GM12878 (cell line): ENCODE measurements at regions of chr15 and their contacts with region 1.

Region 1: GRCh38 chr15:70036585-70037291 is 61.0 kb downstream of the TLE3 start:
- DNase-seq: peak; percentile 88
- ATAC-seq: peak; percentile 81
- H3K4me3 ChIP-seq: peak overlapping the region; percentile 25; the same call in 1 of the 2 replicates
- H3K27ac ChIP-seq: peak overlapping the region; percentile 68
- H3K4me1 ChIP-seq: peaks cover 40% of the 10 kb centered on the region
- H3K27me3 ChIP-seq: no peaks in the 10 kb centered on the region
- CTCF ChIP-seq: no peak
- EP300 ChIP-seq: peak in 1 of 2 experiments; percentile 60; a peak in 1 of 4 replicates
- POLR2A ChIP-seq: no peak
- RAD21 ChIP-seq: no peak

Region 2: DNA sequence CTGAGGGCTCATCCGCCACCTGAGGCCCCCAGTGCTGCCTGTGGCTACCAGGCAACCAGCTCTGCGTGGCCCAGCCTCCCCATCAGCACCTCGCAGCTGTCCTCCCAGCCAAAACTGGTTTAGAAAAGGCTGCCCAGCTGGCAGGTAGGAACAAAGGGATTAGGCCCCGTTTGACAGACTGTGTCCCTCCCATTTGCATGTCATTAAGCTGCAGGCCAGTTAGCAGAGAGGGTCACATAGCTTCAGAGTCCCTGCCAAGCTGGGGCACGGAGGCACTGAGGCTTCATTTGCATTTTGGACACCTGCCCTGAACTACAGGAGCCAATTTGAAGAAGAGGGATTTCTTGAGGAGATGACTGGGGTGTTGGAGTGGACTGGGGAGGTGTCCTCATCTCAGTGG is 116.9 kb before region 1 on chr15:
- CTCF ChIA-PET with region 1: no interaction called
- POLR2A ChIA-PET with region 1: no interaction called
- RAD21 ChIA-PET with region 1: no interaction called
- SMC1A ChIA-PET with region 1: no interaction called
- in situ Hi-C with region 1: no loop called
- intact Hi-C with region 1: no loop called
- DNase-seq: no peak
- ATAC-seq: no peak
- H3K4me3 ChIP-seq: no peak overlapping the region
- H3K27ac ChIP-seq: no peak overlapping the region
- H3K4me1 ChIP-seq: peaks cover 21% of the 10 kb centered on the region
- H3K27me3 ChIP-seq: peaks cover 0 to 3% of the 10 kb centered on the region in 2 experiments; a peak in 3 of 4 replicates
- CTCF ChIP-seq: no peak
- EP300 ChIP-seq: no peak
- POLR2A ChIP-seq: no peak
- RAD21 ChIP-seq: no peak

Region 3: DNA sequence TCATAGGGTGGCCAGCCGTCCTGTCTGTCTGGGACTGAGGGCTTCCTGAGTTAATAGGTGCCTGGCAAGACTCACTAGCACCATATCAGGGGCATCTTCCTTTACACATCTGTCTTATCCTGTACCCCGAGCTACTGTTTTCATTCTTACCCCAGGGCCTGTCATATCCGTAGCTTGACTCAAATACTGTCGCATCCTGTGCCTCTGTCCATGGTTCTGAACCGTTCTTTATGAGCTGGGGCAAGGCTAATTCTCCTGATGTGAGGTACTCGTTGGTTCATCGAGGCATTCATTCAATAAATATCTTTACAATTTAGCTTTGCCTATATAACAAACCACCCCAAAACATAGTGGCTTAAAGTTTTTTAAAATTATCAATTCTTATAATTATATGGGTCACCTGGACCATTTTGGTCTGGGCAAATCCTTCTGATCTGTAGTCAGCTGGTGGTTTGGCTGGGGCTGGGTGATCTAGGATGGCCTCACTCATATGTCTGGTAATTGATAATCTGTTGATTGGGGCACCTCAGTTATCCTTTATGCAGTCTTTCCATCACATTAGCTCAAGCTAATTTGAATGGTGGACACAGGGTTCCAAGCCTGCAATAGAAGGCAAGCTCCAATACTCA is 60.3 kb before region 1 on chr15:
- CTCF ChIA-PET with region 1: interaction called, 5 read pairs
- POLR2A ChIA-PET with region 1: no interaction called
- RAD21 ChIA-PET with region 1: interaction called, 6 read pairs
- SMC1A ChIA-PET with region 1: interaction called, 12 read pairs
- in situ Hi-C with region 1: no loop called
- intact Hi-C with region 1: loop called (anchors 1 kb)
- DNase-seq: no peak
- ATAC-seq: peak; percentile 40; the same call in 2 of the 3 replicates
- H3K4me3 ChIP-seq: no peak overlapping the region
- H3K27ac ChIP-seq: no peak overlapping the region
- H3K4me1 ChIP-seq: peaks cover 30% of the 10 kb centered on the region
- H3K27me3 ChIP-seq: no peaks in the 10 kb centered on the region; a peak in 1 of 4 replicates
- CTCF ChIP-seq: no peak
- EP300 ChIP-seq: no peak
- POLR2A ChIP-seq: no peak
- RAD21 ChIP-seq: no peak

Region 4: GRCh38 chr15:70008697-70009290 is 27.9 kb before region 1 on chr15:
- CTCF ChIA-PET with region 1: interaction called, 14 read pairs
- POLR2A ChIA-PET with region 1: no interaction called
- RAD21 ChIA-PET with region 1: interaction called, 11 read pairs
- SMC1A ChIA-PET with region 1: interaction called, 19 read pairs
- in situ Hi-C with region 1: no loop called
- intact Hi-C with region 1: no loop called
- DNase-seq: no peak
- ATAC-seq: no peak
- H3K4me3 ChIP-seq: no peak overlapping the region
- H3K27ac ChIP-seq: no peak overlapping the region
- H3K4me1 ChIP-seq: peaks cover under 1% of the 10 kb centered on the region
- H3K27me3 ChIP-seq: no peaks in the 10 kb centered on the region
- CTCF ChIP-seq: no peak
- EP300 ChIP-seq: no peak
- POLR2A ChIP-seq: no peak
- RAD21 ChIP-seq: no peak

Region 5: DNA sequence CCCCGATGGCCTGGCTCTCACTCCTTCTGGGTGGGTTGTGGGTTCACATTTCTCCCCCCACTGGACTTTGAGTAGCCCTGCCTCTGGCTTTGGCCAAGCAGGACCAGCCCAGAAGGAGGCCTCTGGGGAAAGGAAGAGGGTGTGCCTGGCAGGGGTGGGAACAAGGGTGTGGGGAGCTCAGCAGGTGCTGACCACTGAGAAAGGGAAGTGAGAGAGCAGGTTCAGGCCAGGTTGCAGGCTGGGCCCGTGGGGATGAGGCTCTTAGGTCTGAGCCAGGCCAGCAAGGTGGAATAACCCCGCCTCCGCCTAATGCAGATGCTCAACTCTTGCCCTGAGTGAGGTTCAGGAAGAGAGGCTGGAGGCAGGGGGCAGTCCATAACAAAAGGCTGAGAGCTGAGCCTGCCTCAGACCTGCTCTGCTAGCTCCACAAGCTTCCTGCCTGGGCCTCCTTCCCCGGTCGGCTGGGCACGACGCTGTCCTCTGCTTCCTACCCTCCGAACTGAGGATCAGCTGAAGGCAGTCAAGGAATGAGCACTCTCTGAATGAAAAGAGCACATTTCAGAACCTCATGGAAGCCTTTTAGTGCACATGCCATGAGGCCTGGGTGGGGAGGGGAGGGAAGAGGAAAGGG is 21.8 kb before region 1 on chr15:
- CTCF ChIA-PET with region 1: interaction called, 14 read pairs
- POLR2A ChIA-PET with region 1: interaction called, 8 read pairs
- RAD21 ChIA-PET with region 1: interaction called, 30 read pairs
- SMC1A ChIA-PET with region 1: interaction called, 19 read pairs
- in situ Hi-C with region 1: no loop called
- intact Hi-C with region 1: loop called (anchors 1 kb)
- DNase-seq: peak; percentile 93
- ATAC-seq: peak; percentile 89
- H3K4me3 ChIP-seq: peak overlapping the region; percentile 10; the same call in 1 of the 2 replicates
- H3K27ac ChIP-seq: peak overlapping the region; percentile 84
- H3K4me1 ChIP-seq: peaks cover 60% of the 10 kb centered on the region
- H3K27me3 ChIP-seq: no peaks in the 10 kb centered on the region
- CTCF ChIP-seq: peak in 1 of 3 experiments; percentile 54; a peak in 2 of 6 replicates
- EP300 ChIP-seq: peak; percentile 76 to 79; a peak in 3 of 4 replicates
- POLR2A ChIP-seq: peak; percentile 79
- RAD21 ChIP-seq: peak; percentile 44; the same call in 1 of the 2 replicates

Region 6: DNA sequence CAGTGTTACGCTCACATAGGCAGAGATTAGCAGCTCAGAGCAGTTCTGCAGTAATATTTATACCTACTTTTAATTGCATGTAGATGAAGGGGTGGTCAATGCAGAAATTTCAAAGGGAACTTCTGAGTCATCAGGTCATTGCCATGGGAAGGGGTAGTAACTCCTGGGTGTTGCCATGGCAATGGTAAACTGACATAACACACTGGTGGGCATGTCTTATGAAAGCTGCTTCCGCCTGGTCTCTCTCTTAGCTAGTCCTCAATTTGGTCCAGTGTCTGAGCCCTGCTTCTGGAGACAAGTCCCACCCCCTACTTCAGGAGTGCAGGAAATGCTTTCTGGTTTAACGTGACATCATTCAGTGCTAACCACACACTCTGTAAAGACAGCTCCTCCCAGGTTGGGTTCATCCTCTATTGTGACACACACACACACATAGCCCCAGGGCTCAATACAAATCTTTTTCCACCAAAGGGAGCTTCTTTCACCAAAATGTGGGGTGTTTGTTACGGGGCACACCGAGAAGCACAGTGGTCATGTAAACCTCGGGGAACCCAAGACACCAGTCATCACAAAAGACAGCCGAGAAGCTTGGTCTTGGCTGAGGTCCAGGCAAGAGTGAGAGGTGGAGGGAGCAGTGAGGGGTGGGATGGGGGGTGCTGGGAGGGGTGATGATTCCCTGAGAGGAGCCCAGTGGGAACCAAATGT is 13.5 kb before region 1 on chr15:
- CTCF ChIA-PET with region 1: interaction called, 11 read pairs
- POLR2A ChIA-PET with region 1: interaction called, 25 read pairs
- RAD21 ChIA-PET with region 1: interaction called, 39 read pairs
- SMC1A ChIA-PET with region 1: interaction called, 30 read pairs
- in situ Hi-C with region 1: no loop called
- intact Hi-C with region 1: no loop called
- DNase-seq: peak; percentile 74
- ATAC-seq: peak; percentile 97
- H3K4me3 ChIP-seq: no peak overlapping the region
- H3K27ac ChIP-seq: peak overlapping the region; percentile 68
- H3K4me1 ChIP-seq: peaks cover 36% of the 10 kb centered on the region
- H3K27me3 ChIP-seq: no peaks in the 10 kb centered on the region; a peak in 1 of 4 replicates
- CTCF ChIP-seq: no peak
- EP300 ChIP-seq: peak in 1 of 2 experiments; percentile 30; a peak in 1 of 4 replicates
- POLR2A ChIP-seq: 0 out of 2 replicates have a peak, but pooled peaks have one; percentile 40
- RAD21 ChIP-seq: no peak

Region 7: DNA sequence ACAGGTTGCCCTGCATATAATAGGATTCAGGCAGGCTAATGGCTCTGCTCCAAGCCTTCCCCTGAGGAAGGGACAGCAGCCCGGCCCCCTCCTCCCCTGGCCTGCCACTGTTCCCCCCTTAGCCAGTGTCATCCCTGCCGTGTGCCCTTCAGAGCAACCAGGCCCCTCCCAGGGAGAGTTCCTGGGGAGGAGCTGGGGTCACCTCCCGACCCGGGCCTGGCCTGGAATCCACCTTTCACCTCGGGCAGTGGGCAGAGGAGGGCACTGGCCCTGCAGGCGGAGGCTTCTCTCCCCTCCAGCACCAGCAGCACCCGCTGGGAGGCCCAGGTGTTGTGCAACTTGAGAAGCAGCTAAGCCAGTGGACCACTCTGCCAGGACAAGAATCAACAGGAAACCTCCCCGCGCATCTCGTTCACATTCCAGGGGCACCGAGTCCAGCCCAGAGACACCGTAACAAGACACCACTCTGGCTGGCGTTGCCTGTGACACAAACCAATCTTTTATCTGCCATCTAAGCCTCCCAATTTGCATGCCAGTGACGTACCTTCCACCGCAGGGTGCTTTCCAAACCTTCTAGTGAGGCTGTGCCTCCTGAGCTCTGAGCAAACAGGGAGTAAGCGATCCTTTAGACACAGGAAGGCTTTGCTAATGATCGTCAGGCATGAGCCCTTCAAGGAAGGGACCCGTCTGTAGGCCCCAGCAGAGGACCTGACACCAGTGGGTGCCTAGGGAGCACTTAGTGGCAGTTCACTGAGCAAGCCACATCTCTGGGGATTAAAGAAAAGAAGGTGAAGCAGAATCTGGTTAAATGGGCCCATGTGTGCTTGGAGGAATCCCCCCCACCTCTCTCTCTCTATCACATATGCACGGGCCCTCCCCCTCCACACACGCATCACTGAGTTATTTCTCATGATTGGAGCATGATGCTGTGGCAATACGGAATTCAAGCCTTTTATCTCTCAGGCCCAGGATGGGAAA is 159.9 kb after region 1 on chr15:
- CTCF ChIA-PET with region 1: no interaction called
- POLR2A ChIA-PET with region 1: no interaction called
- RAD21 ChIA-PET with region 1: no interaction called
- SMC1A ChIA-PET with region 1: no interaction called
- in situ Hi-C with region 1: no loop called
- intact Hi-C with region 1: no loop called
- DNase-seq: peak; percentile 90
- ATAC-seq: peak; percentile 95
- H3K4me3 ChIP-seq: no peak overlapping the region
- H3K27ac ChIP-seq: peak overlapping the region; percentile 45
- H3K4me1 ChIP-seq: peaks cover 25% of the 10 kb centered on the region
- H3K27me3 ChIP-seq: no peaks in the 10 kb centered on the region
- CTCF ChIP-seq: no peak
- EP300 ChIP-seq: peak; percentile 63 to 78; a peak in 3 of 4 replicates
- POLR2A ChIP-seq: peak; percentile 39; the same call in 1 of the 2 replicates
- RAD21 ChIP-seq: no peak